HCT116 (cell line): ENCODE measurements at regions of chr4 and their contacts with region 1.

Region 1: GRCh38 chr4:56387023-56388001 is at the start of gene AASDH:
- DNase-seq: peak; percentile 92
- ATAC-seq: peak; percentile 92
- H3K4me3 ChIP-seq: peak within 1 kb of the TSS; percentile 77 to 85
- H3K27ac ChIP-seq: peak within 1 kb of the TSS; percentile 86
- H3K4me1 ChIP-seq: peaks cover 7 to 15% of the 10 kb centered on the region in 2 experiments; a peak in 3 of 4 replicates
- H3K27me3 ChIP-seq: no peaks in the 10 kb centered on the region
- CTCF ChIP-seq: no peak
- POLR2A ChIP-seq: peak; percentile 97
- RAD21 ChIP-seq: no peak
- total RNA-seq, gene AASDH: 13.7 TPM

Region 2: GRCh38 chr4:56410235-56411062 is 23.1 kb after region 1 on chr4:
- CTCF ChIA-PET with region 1: no interaction called
- POLR2A ChIA-PET with region 1: interaction called, 13 read pairs
- RAD21 ChIA-PET with region 1: no interaction called
- intact Hi-C with region 1: no loop called
- DNase-seq: peak; percentile 89
- ATAC-seq: peak; percentile 78
- H3K4me3 ChIP-seq: no peak overlapping the region
- H3K27ac ChIP-seq: peak overlapping the region; percentile 36; the same call in 1 of the 2 replicates
- H3K4me1 ChIP-seq: peaks cover 16 to 32% of the 10 kb centered on the region in 2 experiments
- H3K27me3 ChIP-seq: no peaks in the 10 kb centered on the region
- CTCF ChIP-seq: no peak
- POLR2A ChIP-seq: no peak
- RAD21 ChIP-seq: peak; percentile 4; the same call in 1 of the 2 replicates